Left cardiac atrium (tissue), 4 donors: ENCODE measurements at regions of chr5 and their contacts with region 1.

Region 1: GRCh38 chr5:60677844-60678664 is 21.9 kb downstream of the DEPDC1B start:
- DNase-seq: no peak
- ATAC-seq: no peak

Region 2: DNA sequence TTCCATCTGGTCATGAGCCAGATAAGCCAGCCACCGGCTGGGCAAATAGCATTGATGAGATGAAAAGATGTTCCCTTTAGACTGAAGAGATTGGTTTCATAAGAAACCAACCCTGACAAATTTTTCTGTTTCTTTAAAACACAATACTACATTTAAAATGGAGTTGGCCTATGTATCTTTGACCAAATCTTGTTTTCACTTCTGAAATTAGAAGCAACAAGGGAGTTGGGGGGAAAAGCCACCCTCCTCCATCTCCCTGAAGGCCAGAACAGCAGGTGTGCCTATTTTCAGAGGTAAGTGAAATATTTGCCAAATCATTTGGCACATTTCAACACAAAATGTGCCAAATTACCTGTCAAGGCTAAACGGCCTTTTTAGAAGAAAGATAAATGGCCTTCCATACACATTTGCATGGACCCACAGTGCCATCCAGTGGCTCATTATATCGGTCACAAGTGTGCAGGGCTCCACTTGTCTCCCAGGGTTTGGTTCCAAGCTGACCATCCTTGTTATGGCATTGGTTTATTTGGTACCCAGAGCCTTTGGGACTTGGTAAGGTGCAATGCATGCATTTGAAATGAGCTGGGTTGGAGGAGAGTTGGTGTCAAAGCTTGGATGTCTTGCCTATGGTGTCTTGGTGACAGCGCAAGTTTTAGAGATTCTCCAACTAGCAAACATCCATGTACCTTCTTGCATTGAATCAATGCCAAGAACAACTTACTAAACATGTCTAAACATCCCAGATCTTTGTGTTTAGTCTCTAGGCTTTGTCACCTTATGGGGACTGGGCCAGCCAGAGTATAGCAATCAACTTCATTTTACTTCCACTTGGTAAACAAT is 1256.0 kb after region 1 on chr5:
- intact Hi-C with region 1: loop called in 1 of 2 experiments (anchors 5 kb)
- DNase-seq: peak; percentile 22
- ATAC-seq: peak; percentile 53 to 68